Activated CD4-positive, alpha-beta T cell treated with anti-CD3 and anti-CD28 coated beads, Interleukin-2, amount 10 ng/mL, durations not matched to agents 7 days and 5 days (primary cell): ENCODE measurements at regions of chr1 and their contacts with region 1.

Region 1: GRCh38 chr1:23098463-23099170 is 70.0 kb downstream of the LUZP1 start:
- DNase-seq: peak; percentile 71
- H3K4me3 Mint-ChIP-seq: no peak overlapping the region
- H3K27ac Mint-ChIP-seq: no peak overlapping the region
- H3K4me1 Mint-ChIP-seq: peaks cover 42% of the 10 kb centered on the region
- H3K27me3 Mint-ChIP-seq: no peaks in the 10 kb centered on the region

Region 2: GRCh38 chr1:22892789-22893188 is 205.8 kb before region 1 on chr1:
- CTCF ChIA-PET with region 1: no interaction called
- POLR2A ChIA-PET with region 1: no interaction called
- DNase-seq: no peak
- H3K4me3 Mint-ChIP-seq: no peak overlapping the region
- H3K27ac Mint-ChIP-seq: no peak overlapping the region
- H3K4me1 Mint-ChIP-seq: no peaks in the 10 kb centered on the region
- H3K27me3 Mint-ChIP-seq: peaks cover 2% of the 10 kb centered on the region

Region 3: DNA sequence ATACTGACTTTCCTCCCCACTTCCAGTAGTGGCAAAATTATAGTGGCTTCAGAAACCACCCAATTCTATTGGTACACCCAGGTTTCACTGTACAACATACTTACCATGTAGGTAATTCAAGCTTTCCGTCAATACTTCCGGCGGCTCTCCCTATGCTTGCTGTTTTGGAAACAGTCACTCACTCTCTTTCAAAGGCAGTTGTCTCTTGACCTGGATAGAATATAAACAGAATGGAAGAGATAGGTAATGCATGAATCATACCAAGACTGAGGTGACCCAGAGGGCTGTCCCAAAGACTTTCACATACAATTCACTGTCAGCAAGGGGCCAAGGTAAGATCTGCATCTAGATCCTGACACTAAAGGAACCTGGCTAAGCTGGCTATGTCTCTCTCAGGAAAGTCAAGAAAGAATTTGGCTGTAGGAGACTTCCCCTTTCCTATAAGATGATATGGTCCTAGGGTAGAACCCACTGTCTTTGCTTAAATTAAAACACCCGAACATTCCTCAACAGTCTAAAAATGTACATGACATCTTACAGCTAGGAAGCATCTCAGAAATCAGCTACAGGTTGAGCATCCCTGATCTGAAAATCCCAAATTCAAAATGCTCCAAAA is 10.4 kb after region 1 on chr1:
- CTCF ChIA-PET with region 1: interaction called, 16 read pairs
- POLR2A ChIA-PET with region 1: no interaction called
- DNase-seq: no peak
- H3K4me3 Mint-ChIP-seq: no peak overlapping the region
- H3K27ac Mint-ChIP-seq: no peak overlapping the region
- H3K4me1 Mint-ChIP-seq: peaks cover 43% of the 10 kb centered on the region
- H3K27me3 Mint-ChIP-seq: no peaks in the 10 kb centered on the region

Region 4: DNA sequence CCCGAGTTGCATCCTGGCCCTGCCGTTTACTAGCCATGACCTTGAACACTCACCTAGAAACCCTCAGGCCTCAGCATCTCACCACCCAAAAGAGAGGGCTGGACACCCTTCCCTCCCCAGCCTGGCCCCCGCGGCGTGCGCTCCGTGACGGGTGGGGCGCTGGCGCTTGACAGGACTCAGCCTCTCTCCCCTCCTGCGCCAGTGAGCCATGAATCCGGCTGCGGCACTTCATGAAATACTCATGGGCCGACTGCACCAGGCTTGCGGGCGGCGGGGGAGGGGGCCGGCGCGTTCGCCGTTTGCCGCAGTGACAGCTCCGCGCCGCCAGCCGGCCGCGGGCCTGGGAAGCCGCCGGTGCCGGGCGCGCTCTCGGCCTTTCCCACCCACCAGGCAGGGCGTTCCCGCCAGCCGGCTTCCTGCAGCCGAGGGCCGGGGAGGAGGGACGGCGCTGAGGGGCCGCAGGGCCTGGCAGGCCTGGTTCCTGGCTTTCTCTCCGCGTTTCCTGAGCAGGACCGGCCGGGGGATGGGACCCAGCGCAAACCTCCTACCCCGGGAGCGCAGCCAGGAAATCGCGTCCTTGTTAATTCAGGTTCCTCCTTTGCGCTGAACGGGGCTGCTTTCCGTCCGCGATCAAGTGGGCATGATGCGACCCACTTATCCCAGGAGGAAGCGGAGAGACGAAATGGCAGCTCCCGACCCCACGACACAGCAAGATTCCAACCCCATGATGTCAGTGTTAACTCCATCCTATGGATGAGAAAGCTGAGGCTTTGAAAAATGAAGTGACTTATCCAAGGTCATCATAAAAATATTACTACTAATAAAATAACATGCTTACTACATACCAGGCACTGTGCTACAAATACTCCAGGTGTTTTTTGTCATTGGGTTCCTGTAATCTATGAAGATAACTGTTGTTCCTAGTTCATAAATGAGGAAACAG is 79.1 kb after region 1 on chr1:
- CTCF ChIA-PET with region 1: interaction called, 137 read pairs
- POLR2A ChIA-PET with region 1: no interaction called
- DNase-seq: peak; percentile 47
- H3K4me3 Mint-ChIP-seq: peak overlapping the region; percentile 65
- H3K27ac Mint-ChIP-seq: peak overlapping the region; percentile 60
- H3K4me1 Mint-ChIP-seq: peaks cover 26% of the 10 kb centered on the region
- H3K27me3 Mint-ChIP-seq: peaks cover 35% of the 10 kb centered on the region

Region 5: GRCh38 chr1:23184212-23184934 is 85.8 kb after region 1 on chr1:
- CTCF ChIA-PET with region 1: interaction called, 137 read pairs
- POLR2A ChIA-PET with region 1: interaction called, 6 read pairs
- DNase-seq: peak; percentile 45
- H3K4me3 Mint-ChIP-seq: no peak overlapping the region
- H3K27ac Mint-ChIP-seq: peak overlapping the region; percentile 10
- H3K4me1 Mint-ChIP-seq: peaks cover 10% of the 10 kb centered on the region
- H3K27me3 Mint-ChIP-seq: peaks cover 9% of the 10 kb centered on the region